ENCODE measurements at regions of chr1 and their contacts with region 1.

Region 1: DNA sequence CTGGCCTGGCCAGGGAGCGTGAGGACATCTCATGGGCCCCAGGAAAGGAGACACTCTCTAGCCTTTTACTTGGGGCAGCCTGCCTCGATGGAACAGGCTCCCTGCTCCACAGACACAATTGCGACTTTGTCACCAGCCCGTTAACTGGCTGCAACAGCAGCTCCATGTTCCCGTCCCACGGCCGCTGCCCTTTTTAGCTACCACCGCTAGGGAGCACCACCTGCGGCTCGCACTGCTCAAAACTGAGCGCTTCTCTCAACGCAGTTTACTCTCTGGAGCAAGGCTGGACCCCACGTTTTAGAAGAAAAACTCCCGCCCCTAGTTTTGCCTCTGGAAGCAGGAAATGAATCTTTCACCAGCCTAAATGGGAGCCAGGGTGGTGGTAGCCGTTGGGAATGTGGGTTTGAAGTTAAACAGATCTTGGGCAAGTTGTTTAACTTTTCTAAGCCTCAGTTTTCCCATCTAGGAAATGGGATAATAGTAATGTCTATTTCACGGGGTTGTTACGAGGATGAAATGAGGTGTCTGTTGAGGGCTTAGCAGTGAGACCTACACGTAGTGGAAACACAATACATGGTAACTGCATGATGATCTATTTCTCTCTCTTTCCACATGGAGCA is 3.5 kb upstream of the LRRC38 start:
- DNase-seq: peak; percentile 79
- ATAC-seq: peak; percentile 65
- H3K4me3 Mint-ChIP-seq: no peak overlapping the region
- H3K27ac Mint-ChIP-seq: no peak overlapping the region
- H3K4me1 Mint-ChIP-seq: peaks cover 3% of the 10 kb centered on the region
- H3K27me3 Mint-ChIP-seq: peaks cover 69% of the 10 kb centered on the region
- CTCF ChIP-seq: peak; percentile 43; the same call in 1 of the 2 replicates

Region 2: DNA sequence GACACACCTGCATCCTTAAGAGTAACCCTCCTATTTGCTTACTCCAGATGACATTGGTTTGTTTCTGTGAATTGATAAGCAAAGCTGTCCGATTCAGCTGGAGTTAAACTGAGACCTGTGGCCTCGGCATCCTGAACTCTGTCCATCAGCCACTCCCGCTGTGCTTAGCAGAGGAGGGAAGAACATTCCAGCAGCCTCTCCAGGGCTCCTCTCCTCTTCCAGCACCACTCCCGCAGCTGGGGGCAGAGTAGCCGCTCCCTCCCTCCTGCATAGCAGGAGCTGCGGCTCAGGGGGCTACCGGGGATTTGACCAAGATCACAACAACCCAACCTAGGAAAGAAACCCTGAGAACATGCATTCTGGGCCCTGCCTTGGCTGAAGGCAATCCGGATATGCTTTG is 12.3 kb before region 1 on chr1:
- CTCF ChIA-PET with region 1: interaction called, 10 read pairs
- POLR2A ChIA-PET with region 1: no interaction called
- DNase-seq: peak; percentile 16
- ATAC-seq: peak; percentile 70
- H3K4me3 Mint-ChIP-seq: no peak overlapping the region
- H3K27ac Mint-ChIP-seq: no peak overlapping the region
- H3K4me1 Mint-ChIP-seq: peaks cover 23% of the 10 kb centered on the region
- H3K27me3 Mint-ChIP-seq: peaks cover 12% of the 10 kb centered on the region
- CTCF ChIP-seq: no peak

Region 3: GRCh38 chr1:13539683-13540082 is 22.4 kb after region 1 on chr1:
- CTCF ChIA-PET with region 1: interaction called, 13 read pairs
- POLR2A ChIA-PET with region 1: no interaction called
- DNase-seq: no peak
- ATAC-seq: no peak
- H3K4me3 Mint-ChIP-seq: no peak overlapping the region
- H3K27ac Mint-ChIP-seq: no peak overlapping the region
- H3K4me1 Mint-ChIP-seq: peaks cover 8% of the 10 kb centered on the region; the same call in 1 of the 2 replicates
- H3K27me3 Mint-ChIP-seq: no peaks in the 10 kb centered on the region
- CTCF ChIP-seq: no peak

Region 4: GRCh38 chr1:13570924-13571323 is 53.6 kb after region 1 on chr1:
- CTCF ChIA-PET with region 1: interaction called, 13 read pairs
- POLR2A ChIA-PET with region 1: interaction called, 3 read pairs
- DNase-seq: no peak
- ATAC-seq: peak; percentile 79
- H3K4me3 Mint-ChIP-seq: no peak overlapping the region
- H3K27ac Mint-ChIP-seq: no peak overlapping the region
- H3K4me1 Mint-ChIP-seq: peaks cover 8% of the 10 kb centered on the region
- H3K27me3 Mint-ChIP-seq: peaks cover 2% of the 10 kb centered on the region
- CTCF ChIP-seq: peak; percentile 56

Region 5: DNA sequence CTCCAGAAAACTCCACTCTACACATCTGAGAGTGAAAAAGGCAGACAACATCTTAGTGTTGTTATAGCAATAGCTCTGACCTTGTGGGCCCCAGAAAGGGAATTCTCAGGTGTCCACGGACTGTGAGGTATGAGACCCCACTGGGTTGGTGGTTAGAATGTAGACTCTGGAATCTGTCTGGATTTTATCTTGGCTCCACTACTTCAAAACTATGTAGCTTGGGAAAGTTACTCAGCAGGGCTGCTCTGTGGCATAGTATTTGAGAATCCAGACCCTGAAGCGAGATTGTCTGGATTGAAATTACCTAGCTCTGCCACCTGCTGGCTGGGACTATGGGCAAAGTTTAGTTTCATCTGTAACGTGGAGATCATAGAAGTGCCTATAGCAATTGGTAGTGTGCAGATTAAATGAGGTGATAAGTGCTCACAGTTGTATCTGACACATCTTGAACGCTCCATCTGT is 208.4 kb after region 1 on chr1:
- CTCF ChIA-PET with region 1: no interaction called
- POLR2A ChIA-PET with region 1: no interaction called
- DNase-seq: peak; percentile 30
- ATAC-seq: no peak
- H3K4me3 Mint-ChIP-seq: no peak overlapping the region
- H3K27ac Mint-ChIP-seq: no peak overlapping the region
- H3K4me1 Mint-ChIP-seq: peaks cover 15% of the 10 kb centered on the region
- H3K27me3 Mint-ChIP-seq: peaks cover 76% of the 10 kb centered on the region
- CTCF ChIP-seq: no peak